ENCODE measurements at regions of chr20 and their contacts with region 1.

Region 1: DNA sequence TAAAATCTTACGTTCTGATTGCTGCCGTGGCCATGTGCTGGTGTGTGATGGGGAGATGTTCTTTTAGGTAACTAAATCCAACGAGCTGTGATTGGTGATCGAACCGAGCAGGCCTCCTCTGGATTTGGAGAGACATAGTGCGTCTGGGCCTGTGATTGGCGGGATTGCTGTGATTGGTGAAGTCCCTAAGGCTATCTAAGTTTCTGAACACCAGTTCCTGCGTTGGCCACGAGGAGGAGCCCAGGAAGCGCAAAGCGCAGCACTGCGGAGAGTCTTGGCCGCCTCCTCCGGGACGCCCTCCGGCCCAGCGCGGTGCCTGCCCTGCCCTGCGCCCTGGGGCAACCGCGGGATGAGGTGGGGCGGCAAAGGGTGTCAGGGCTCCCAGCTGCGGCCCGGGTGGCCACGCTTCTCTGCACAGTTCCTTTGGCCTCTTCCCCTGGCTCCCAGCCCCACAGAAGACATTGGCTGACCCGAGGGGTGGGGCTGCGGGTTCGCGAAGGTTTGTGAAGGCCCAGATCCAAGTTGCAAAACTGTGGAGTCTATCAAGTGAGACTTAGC is 33.0 kb downstream of the HNF4A start:
- DNase-seq: peak in 2 of 6 donors; percentile 51 to 61
- ATAC-seq: peak in 3 of 4 donors; percentile 39 to 55 (median 54)
- H3K4me3 ChIP-seq: no peak overlapping the region
- H3K27ac ChIP-seq: no peak overlapping the region
- H3K4me1 ChIP-seq: peaks cover 0 to 4% (median 0%) of the 10 kb centered on the region in 3 donors
- H3K27me3 ChIP-seq: no peaks in the 10 kb centered on the region
- CTCF ChIP-seq: peak in 2 of 4 donors; percentile 16 to 27

Region 2: DNA sequence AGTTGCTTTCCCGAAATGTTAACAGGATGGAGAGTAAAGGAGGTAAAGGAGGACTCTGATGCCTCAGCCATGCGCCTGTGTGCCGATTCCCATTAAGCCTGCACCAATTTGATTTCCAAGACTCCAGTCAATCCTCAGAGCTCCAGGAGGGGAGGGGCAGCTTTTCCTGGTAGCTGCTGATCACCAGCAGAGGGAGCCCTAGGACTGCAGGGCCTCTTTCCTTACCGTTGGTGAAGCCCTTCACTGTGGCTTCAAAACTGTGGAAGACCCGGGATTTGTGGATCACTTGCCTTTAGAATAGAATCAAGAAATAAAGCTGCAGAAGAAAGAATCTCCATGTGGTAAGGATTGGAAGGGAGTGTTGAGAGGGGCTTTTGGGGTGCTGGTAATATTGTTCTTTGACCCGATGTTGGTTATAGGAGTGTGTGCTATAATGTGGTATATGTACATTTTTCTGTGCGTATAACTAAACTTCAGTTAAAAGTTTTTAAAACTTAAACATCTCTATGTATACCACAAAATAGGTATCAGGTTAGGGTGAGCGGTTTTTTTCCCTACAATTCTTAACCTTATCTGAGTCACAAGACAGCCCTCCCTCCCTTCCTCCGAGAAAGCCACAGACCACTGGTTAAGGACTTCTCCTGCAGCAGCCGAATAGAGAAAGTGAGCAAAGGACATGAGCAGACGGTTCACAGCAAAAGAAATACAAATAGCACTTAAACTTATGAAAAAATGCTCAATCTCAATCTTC is 171.0 kb before region 1 on chr20:
- intact Hi-C with region 1: loop called in 1 of 3 experiments (anchors 5 kb)
- DNase-seq: peak; percentile 62 to 79 (median 72)
- ATAC-seq: peak; percentile 70 to 89 (median 87)
- H3K4me3 ChIP-seq: no peak overlapping the region
- H3K27ac ChIP-seq: no peak overlapping the region
- H3K4me1 ChIP-seq: peaks cover 0 to 2% (median 0%) of the 10 kb centered on the region in 3 donors
- H3K27me3 ChIP-seq: no peaks in the 10 kb centered on the region
- CTCF ChIP-seq: peak; percentile 80 to 86 (median 86)

Region 3: GRCh38 chr20:44471481-44471882 is 82.9 kb after region 1 on chr20:
- intact Hi-C with region 1: no loop called
- DNase-seq: no peak
- ATAC-seq: peak in 3 of 4 donors; percentile 15 to 33 (median 28)
- H3K4me3 ChIP-seq: no peak overlapping the region
- H3K27ac ChIP-seq: no peak overlapping the region
- H3K4me1 ChIP-seq: peaks cover 1 to 8% (median 8%) of the 10 kb centered on the region in 3 donors
- H3K27me3 ChIP-seq: no peaks in the 10 kb centered on the region
- CTCF ChIP-seq: peak in 3 of 4 donors; percentile 18 to 31 (median 19)

Measured in pancreas (tissue), 10 donors.